MCF 10A (cell line): ENCODE measurements at regions of chr1 and their contacts with region 1.

Region 1: GRCh38 chr1:231357831-231358354 is 19.8 kb downstream of the SPRTN start:
- DNase-seq: peak; percentile 88
- H3K4me3 Mint-ChIP-seq: no peak overlapping the region
- H3K27ac Mint-ChIP-seq: no peak overlapping the region
- H3K4me1 Mint-ChIP-seq: peaks cover 17% of the 10 kb centered on the region
- H3K27me3 Mint-ChIP-seq: no peaks in the 10 kb centered on the region
- CTCF ChIP-seq: peak; percentile 96

Region 2: DNA sequence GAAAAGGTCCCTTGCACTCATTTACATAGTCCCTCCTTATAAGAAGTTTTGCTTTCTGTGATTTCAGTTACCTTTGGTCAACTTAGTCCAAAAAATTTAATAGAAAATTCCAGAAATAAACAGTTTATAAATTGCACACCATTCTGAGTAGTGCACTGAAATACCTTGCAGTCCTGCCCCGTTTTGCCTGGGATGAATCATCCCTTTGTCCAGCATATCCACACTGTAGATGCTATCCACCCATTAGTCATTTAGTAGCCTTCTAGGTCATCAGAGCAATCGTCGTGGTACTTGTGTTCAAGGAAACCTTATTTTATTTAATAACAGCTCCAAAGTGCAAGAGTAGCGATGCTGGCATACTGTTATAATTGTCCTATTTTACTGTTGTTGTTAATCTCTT is 18.2 kb after region 1 on chr1:
- CTCF ChIA-PET with region 1: interaction called, 9 read pairs
- POLR2A ChIA-PET with region 1: interaction called, 34 read pairs
- intact Hi-C with region 1: no loop called
- DNase-seq: peak; percentile 42
- H3K4me3 Mint-ChIP-seq: no peak overlapping the region
- H3K27ac Mint-ChIP-seq: no peak overlapping the region
- H3K4me1 Mint-ChIP-seq: peaks cover 10% of the 10 kb centered on the region
- H3K27me3 Mint-ChIP-seq: no peaks in the 10 kb centered on the region
- CTCF ChIP-seq: no peak

Region 3: GRCh38 chr1:231416901-231417300 is 59.0 kb after region 1 on chr1:
- CTCF ChIA-PET with region 1: interaction called, 27 read pairs
- POLR2A ChIA-PET with region 1: interaction called, 169 read pairs
- intact Hi-C with region 1: loop called (anchors 1 kb)
- DNase-seq: no peak
- H3K4me3 Mint-ChIP-seq: peak overlapping the region; percentile 82
- H3K27ac Mint-ChIP-seq: peak overlapping the region; percentile 4
- H3K4me1 Mint-ChIP-seq: peaks cover 54% of the 10 kb centered on the region
- H3K27me3 Mint-ChIP-seq: no peaks in the 10 kb centered on the region
- CTCF ChIP-seq: no peak

Region 4: DNA sequence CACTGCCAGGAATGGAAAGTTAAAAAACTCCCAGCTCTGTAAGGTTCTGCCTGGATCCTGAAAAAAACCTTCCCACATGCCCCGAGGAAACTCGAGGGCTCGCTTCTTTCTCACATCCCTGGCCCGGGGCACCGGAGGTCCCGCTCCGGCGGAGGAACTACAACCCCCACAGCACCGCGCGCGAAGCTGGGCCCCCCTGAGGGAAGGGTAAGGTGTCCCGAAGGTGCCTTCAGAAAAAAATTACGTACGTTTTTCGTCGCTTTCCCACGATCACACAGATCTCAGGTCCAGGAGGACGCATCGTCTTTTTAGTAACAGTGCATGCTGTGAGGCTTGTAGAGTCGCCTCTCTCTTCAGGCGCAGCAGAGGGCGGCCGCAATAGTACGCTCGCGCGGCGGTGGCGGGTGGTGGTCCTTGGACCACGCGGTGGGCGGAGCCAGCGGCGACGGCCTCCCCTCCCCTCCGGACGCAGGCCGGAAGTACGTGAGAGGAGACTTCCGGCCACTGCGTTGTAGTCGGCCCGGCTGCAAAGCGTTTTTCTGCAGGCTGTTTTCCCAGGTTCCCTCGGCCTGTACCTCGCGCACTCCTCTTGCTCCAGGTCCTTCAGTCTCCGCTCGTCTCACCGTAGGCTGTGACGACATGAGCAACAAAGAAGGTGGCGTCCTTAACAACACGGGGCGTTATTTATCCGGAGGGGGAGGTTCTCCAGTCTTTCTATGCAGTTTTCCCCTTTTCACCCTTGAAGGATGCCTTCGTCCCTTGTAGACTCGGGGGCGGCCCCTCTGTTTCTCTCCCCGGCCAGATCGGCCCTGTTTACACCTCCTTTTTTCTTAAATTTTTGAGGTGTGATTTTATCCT is 170.5 kb after region 1 on chr1 and contains the start of gene TSNAX:
- CTCF ChIA-PET with region 1: interaction called, 10 read pairs
- POLR2A ChIA-PET with region 1: interaction called, 10 read pairs
- intact Hi-C with region 1: loop called (anchors 1 kb)
- DNase-seq: peak; percentile 97
- H3K4me3 Mint-ChIP-seq: peak within 1 kb of the TSS; percentile 97
- H3K27ac Mint-ChIP-seq: peak within 1 kb of the TSS; percentile 98
- H3K4me1 Mint-ChIP-seq: peaks cover 36% of the 10 kb centered on the region
- H3K27me3 Mint-ChIP-seq: no peaks in the 10 kb centered on the region
- CTCF ChIP-seq: no peak
- total RNA-seq, gene TSNAX: 79.0 and 80.2 TPM in 2 replicates

Region 5: GRCh38 chr1:231584124-231584523 is 226.2 kb after region 1 on chr1:
- CTCF ChIA-PET with region 1: interaction called, 51 read pairs
- POLR2A ChIA-PET with region 1: interaction called, 6 read pairs
- intact Hi-C with region 1: loop called (anchors 1 kb)
- DNase-seq: peak; percentile 73
- H3K4me3 Mint-ChIP-seq: no peak overlapping the region
- H3K27ac Mint-ChIP-seq: no peak overlapping the region
- H3K4me1 Mint-ChIP-seq: peaks cover 6% of the 10 kb centered on the region
- H3K27me3 Mint-ChIP-seq: no peaks in the 10 kb centered on the region
- CTCF ChIP-seq: peak; percentile 54